ENCODE measurements at regions of chr16 and their contacts with region 1.

Region 1: DNA sequence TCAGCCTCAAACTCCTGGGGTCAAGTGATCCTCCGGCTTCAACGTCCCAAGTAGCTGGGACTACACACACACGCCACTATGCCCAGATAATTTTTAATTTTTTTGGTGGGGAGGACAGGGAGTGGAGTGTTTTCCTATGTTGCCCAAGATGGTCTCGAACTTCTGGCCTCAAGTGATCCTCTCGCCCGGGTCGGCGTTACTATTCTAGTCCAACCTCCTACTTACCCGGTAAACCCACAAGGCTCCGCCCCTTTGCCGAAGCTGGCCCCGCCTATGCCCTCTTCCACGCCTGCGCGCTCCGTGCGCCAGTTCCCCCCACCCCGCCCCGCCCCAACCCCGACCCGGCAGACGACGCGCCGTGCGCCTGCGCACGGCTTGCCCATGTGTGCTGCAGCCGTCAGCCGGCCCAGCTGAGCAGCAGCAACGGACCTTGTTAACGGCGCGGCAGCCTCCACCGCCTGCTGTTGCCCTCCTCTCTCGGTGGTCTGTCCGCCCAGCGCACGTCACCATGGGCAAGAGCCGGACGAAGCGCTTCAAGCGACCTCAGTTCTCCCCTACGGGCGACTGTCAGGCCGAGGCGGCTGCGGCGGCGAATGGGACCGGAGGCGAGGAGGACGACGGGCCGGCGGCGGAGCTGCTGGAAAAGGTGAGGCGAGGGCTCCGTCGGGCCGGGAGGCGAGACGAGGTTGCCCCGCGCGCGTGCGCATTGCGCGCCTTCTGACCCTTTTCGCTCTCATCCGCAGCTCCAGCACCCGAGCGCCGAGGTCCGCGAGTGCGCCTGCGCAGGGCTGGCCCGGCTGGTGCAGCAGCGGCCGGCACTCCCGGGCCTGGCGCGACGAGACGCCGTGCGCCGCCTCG is at the start of gene HEATR3:
- DNase-seq: peak; percentile 95
- ATAC-seq: peak; percentile 92
- H3K4me3 Mint-ChIP-seq: peak within 1 kb of the TSS; percentile 90
- H3K27ac Mint-ChIP-seq: peak within 1 kb of the TSS; percentile 94
- H3K4me1 Mint-ChIP-seq: peaks cover 39% of the 10 kb centered on the region
- H3K27me3 Mint-ChIP-seq: peaks cover 3% of the 10 kb centered on the region
- total RNA-seq, gene HEATR3: 29.7 to 31.7 TPM

Region 2: GRCh38 chr16:50081428-50082018 is 15.7 kb after region 1 on chr16:
- CTCF ChIA-PET with region 1: interaction called, 24 read pairs
- POLR2A ChIA-PET with region 1: interaction called, 3 read pairs
- DNase-seq: no peak
- ATAC-seq: no peak
- H3K4me3 Mint-ChIP-seq: no peak overlapping the region
- H3K27ac Mint-ChIP-seq: peak overlapping the region; percentile 47
- H3K4me1 Mint-ChIP-seq: peaks cover 15% of the 10 kb centered on the region
- H3K27me3 Mint-ChIP-seq: no peaks in the 10 kb centered on the region

Region 3: DNA sequence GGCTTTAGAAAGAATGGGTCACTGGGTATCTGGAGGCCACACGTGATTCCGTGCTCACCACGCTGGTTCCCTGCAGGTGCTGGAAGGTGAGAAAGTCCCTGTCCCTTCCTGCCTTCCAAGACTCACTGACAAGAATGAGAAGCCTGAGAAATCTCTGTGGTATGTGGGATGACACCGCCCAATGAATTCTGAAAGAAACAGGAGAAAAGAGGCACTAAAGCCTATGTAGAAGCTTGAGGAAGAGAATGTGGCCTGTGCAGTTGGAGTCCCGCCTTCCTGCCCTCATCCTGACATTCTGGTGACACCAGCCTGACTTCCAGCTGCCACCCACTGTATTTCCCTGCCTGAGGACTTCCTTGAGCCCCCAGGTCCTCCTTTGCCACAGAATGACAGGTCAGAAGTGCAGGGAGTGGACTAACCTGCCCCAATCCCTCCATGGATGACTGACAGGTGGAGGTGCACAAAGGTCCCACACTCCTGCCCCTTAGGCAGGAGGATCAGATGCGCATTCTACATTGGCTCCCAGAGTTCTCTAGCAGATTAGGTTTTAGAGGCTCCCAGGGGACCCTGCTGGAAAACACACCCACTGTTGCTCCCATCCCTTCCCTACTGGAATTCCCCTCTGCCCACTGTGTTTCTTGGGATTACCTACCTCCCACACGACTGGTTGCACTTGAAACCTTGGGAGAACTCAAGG is 48.7 kb after region 1 on chr16:
- CTCF ChIA-PET with region 1: no interaction called
- POLR2A ChIA-PET with region 1: no interaction called
- DNase-seq: no peak
- ATAC-seq: no peak
- H3K4me3 Mint-ChIP-seq: no peak overlapping the region
- H3K27ac Mint-ChIP-seq: no peak overlapping the region
- H3K4me1 Mint-ChIP-seq: peaks cover 2% of the 10 kb centered on the region
- H3K27me3 Mint-ChIP-seq: peaks cover 2% of the 10 kb centered on the region

Region 4: GRCh38 chr16:50152807-50153452 is 87.1 kb after region 1 on chr16 and contains the start of gene TENT4B:
- CTCF ChIA-PET with region 1: interaction called, 20 read pairs
- POLR2A ChIA-PET with region 1: interaction called, 4 read pairs
- DNase-seq: peak; percentile 91
- ATAC-seq: peak; percentile 80
- H3K4me3 Mint-ChIP-seq: peak within 1 kb of the TSS; percentile 88
- H3K27ac Mint-ChIP-seq: peak within 1 kb of the TSS; percentile 95
- H3K4me1 Mint-ChIP-seq: peaks cover 32% of the 10 kb centered on the region
- H3K27me3 Mint-ChIP-seq: no peaks in the 10 kb centered on the region
- total RNA-seq, gene TENT4B: 17.3 to 18.0 TPM

Region 5: DNA sequence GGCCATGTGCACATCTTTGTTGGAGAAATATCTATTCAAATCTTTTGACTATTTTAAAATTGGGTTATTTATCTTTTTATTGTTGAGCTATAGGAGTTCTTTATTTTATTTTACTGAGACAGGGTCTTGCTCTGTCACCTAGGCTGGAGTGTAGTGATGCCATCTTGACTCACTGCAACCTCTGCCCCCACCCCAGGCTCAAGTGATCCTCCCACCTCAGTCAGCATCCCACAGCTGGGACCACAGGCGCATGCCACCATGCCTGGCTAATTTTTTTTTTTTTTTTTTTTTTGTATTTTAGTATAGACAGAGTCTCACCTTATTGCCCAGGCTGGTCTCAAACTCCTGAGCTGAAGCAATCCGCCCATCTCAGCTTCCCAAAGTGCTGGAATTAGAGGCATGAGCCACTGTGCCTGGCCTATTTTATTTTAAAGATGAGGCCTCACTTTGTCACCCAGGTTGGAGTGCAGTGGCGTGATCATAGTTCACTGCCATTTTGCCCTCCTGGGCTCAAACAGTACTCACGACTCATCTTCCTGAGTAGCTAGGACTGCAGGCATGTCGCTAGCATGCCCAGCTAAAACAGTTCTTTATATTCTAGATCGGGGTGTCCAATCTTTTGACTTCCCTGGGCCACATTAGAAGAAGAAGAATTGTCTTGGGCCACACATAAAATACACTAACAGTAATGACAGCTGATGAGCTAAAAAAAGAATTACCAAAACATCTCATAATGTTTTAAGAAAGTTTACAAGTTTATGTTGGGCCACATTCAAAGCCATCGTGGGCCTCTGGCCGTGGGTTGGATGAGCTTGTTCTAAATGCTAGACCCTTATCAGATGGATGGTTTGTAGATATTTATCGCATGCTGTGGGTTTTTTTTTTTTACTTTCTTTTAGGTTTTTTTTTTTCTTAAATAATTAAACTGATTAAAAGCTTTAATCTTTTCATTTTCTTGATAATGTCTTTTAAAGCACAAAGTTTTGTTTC is 101.0 kb after region 1 on chr16:
- CTCF ChIA-PET with region 1: interaction called, 28 read pairs
- POLR2A ChIA-PET with region 1: no interaction called
- DNase-seq: no peak
- ATAC-seq: peak; percentile 62
- H3K4me3 Mint-ChIP-seq: no peak overlapping the region
- H3K27ac Mint-ChIP-seq: peak overlapping the region; percentile 53
- H3K4me1 Mint-ChIP-seq: peaks cover 49% of the 10 kb centered on the region
- H3K27me3 Mint-ChIP-seq: no peaks in the 10 kb centered on the region

Measured in activated CD8-positive, alpha-beta T cell treated with anti-CD3 and anti-CD28 coated beads, Interleukin-2, amount 10 ng/mL, durations not matched to agents 7 days and 5 days (primary cell).